Activated CD4-positive, alpha-beta T cell treated with anti-CD3 and anti-CD28 coated beads for 36 hours (primary cell): ENCODE measurements at regions of chr7 and their contacts with region 1.

Region 1: DNA sequence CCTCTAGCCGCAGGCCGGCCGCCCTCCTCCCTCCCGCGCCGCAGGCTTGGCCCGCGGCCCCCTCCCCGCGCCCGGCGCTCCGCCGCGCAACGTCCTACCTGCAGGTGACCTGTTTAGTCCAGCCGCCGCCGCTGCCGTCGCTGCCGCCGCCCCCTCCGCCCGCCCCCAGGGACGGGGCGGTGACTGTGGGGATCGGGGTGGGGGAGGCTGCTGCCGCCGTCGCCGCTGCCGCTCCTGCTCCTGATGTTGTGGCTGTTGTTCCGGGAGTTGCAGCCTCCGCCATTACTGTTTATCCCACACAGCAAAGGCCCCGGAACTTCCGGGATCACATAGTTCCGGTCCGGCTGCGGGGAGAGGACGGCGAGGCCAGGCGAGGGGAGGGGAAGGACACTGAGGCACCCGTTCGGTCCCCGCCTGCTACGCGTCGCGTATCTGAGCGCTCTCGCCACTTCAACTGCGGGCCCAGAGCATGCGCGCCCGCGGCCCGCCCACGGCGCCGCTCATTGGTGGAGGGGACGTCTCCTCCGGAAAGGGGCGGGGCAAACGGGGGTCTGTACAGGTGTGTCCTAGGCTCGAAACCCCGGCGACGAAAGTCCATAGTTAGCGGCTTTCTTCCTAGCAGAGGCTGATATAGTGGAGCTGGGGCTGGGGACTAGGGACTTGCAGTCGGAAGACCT is at the start of gene MKRN1:
- DNase-seq: peak; percentile 97
- ATAC-seq: peak; percentile 95
- H3K4me3 Mint-ChIP-seq: peak within 1 kb of the TSS; percentile 99
- H3K27ac Mint-ChIP-seq: peak within 1 kb of the TSS; percentile 95
- H3K4me1 Mint-ChIP-seq: peaks cover 24% of the 10 kb centered on the region
- H3K27me3 Mint-ChIP-seq: no peaks in the 10 kb centered on the region
- total RNA-seq, gene MKRN1: 73.6 to 77.9 TPM

Region 2: GRCh38 chr7:140230861-140231770 is 248.1 kb before region 1 on chr7:
- CTCF ChIA-PET with region 1: no interaction called
- POLR2A ChIA-PET with region 1: no interaction called
- intact Hi-C with region 1: loop called in 1 of 2 experiments (anchors 5 kb)
- DNase-seq: peak; percentile 86
- ATAC-seq: peak; percentile 65
- H3K4me3 Mint-ChIP-seq: peak overlapping the region; percentile 99
- H3K27ac Mint-ChIP-seq: peak overlapping the region; percentile 99
- H3K4me1 Mint-ChIP-seq: peaks cover 45% of the 10 kb centered on the region
- H3K27me3 Mint-ChIP-seq: no peaks in the 10 kb centered on the region

Region 3: GRCh38 chr7:140403878-140404564 is 75.2 kb before region 1 on chr7 and contains the start of gene RAB19:
- CTCF ChIA-PET with region 1: no interaction called
- POLR2A ChIA-PET with region 1: no interaction called
- intact Hi-C with region 1: loop called (anchors 1 to 5 kb)
- DNase-seq: peak; percentile 63
- ATAC-seq: peak; percentile 77
- H3K4me3 Mint-ChIP-seq: peak within 1 kb of the TSS; percentile 90
- H3K27ac Mint-ChIP-seq: peak within 1 kb of the TSS; percentile 97
- H3K4me1 Mint-ChIP-seq: peaks cover 35% of the 10 kb centered on the region
- H3K27me3 Mint-ChIP-seq: no peaks in the 10 kb centered on the region
- total RNA-seq, gene RAB19: 11.3 to 12.8 TPM

Region 4: DNA sequence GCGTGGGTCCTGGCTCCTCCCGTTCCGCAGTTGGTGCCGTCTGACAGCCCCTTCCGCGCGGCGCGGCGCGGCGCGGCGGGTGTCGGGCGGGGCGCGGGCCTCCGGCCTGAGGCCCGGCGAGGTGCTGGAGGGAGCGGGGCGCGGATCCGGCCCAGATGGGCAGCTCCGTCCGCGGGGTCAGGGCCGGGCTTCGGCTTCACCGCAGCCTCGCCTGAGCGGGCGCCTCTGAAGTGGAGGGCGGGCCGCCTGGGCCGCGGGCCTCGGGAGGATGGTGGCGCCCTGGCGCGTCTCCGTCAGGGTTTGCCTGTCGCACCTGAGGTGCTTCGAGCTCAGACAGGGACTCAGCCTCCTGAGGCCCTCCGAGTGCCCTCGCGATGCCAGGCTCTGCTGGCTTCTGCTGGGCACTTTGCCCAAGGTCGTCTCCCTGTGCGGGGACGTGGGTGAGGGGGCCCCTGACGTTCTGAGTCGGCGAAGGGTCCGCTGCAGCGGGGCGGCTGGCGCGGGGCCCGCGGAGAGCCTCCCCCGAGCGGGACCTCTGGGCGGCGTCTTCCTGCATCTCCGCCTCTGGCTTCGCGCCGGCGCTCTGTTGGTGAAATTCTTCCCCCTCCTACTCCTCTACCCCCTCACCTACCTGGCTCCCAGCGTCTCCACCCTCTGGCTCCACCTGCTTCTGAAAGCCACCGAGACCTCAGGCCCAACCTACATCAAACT is 194.0 kb after region 1 on chr7:
- CTCF ChIA-PET with region 1: interaction called, 3 read pairs
- POLR2A ChIA-PET with region 1: no interaction called
- intact Hi-C with region 1: loop called in 1 of 2 experiments (anchors 1 kb)
- DNase-seq: peak; percentile 72
- ATAC-seq: peak; percentile 74
- H3K4me3 Mint-ChIP-seq: peak overlapping the region; percentile 85
- H3K27ac Mint-ChIP-seq: peak overlapping the region; percentile 87
- H3K4me1 Mint-ChIP-seq: peaks cover 35% of the 10 kb centered on the region
- H3K27me3 Mint-ChIP-seq: no peaks in the 10 kb centered on the region

Region 5: GRCh38 chr7:141551094-141551781 is 1072.0 kb after region 1 on chr7 and contains the start of gene AGK:
- CTCF ChIA-PET with region 1: no interaction called
- POLR2A ChIA-PET with region 1: no interaction called
- intact Hi-C with region 1: loop called in 1 of 2 experiments (anchors 2 kb)
- DNase-seq: peak; percentile 87
- ATAC-seq: peak; percentile 95
- H3K4me3 Mint-ChIP-seq: peak within 1 kb of the TSS; percentile 88
- H3K27ac Mint-ChIP-seq: peak within 1 kb of the TSS; percentile 91
- H3K4me1 Mint-ChIP-seq: peaks cover 36% of the 10 kb centered on the region
- H3K27me3 Mint-ChIP-seq: no peaks in the 10 kb centered on the region
- total RNA-seq, gene AGK: 49.7 to 52.9 TPM